ENCODE measurements at regions of chr5 and their contacts with region 1.

Region 1: DNA sequence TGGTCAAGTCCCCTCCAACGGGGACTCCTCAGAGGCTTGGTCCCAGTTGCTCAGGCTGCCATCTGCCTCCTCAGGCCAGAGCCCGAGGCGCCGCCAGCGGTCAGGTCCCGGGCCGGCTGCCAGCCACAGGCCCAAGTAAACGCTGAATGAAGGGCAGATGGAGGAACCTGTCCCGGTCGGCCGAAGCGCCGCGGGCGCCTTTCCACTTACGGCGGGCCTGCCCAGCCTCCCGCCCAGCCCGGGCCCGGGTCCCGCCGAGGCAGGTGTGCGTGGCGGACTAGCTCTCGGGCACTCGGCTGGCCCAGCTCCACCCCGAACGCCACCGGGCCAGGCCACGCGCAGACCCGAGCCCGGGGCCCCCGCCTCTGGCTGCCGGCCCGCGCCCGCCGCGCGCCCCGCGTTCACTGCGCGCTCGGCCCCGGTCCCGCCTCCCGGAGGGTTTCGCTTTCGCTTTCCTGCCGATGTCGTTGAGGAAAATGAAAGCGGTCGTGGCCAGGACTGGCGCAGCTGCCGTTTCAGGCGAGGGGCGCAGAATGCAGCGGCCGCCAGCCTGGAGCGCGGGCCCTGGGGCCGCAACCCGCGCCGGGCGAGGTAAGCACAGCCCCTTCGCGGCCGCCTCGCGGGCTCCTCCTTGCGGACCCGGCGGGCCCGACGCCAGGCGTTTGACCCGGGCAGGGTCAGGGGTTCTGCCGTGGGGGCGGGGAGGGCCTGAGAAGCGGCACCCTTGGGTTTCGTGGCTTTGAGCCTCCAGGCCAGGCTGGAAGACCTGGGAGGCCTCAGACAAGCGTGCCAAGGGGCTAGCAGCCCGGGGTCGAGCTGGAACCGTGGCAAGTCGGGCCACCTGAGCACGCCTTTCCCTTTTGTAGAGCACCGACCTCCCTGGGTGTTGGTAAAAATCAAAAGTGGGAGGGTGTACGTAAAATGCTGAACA is 41.2 kb downstream of the SLC22A5 start:
- DNase-seq: peak; percentile 92
- ATAC-seq: peak; percentile 68
- H3K4me3 Mint-ChIP-seq: peak overlapping the region; percentile 83
- H3K27ac Mint-ChIP-seq: peak overlapping the region; percentile 98
- H3K4me1 Mint-ChIP-seq: peaks cover 71% of the 10 kb centered on the region
- H3K27me3 Mint-ChIP-seq: no peaks in the 10 kb centered on the region

Region 2: GRCh38 chr5:132386644-132387286 is 24.0 kb before region 1 on chr5:
- CTCF ChIA-PET with region 1: interaction called, 21 read pairs
- POLR2A ChIA-PET with region 1: no interaction called
- intact Hi-C with region 1: loop called (anchors 1 to 2 kb)
- DNase-seq: peak; percentile 88
- ATAC-seq: peak; percentile 87
- H3K4me3 Mint-ChIP-seq: no peak overlapping the region
- H3K27ac Mint-ChIP-seq: peak overlapping the region; percentile 29
- H3K4me1 Mint-ChIP-seq: peaks cover 40% of the 10 kb centered on the region
- H3K27me3 Mint-ChIP-seq: no peaks in the 10 kb centered on the region

Region 3: DNA sequence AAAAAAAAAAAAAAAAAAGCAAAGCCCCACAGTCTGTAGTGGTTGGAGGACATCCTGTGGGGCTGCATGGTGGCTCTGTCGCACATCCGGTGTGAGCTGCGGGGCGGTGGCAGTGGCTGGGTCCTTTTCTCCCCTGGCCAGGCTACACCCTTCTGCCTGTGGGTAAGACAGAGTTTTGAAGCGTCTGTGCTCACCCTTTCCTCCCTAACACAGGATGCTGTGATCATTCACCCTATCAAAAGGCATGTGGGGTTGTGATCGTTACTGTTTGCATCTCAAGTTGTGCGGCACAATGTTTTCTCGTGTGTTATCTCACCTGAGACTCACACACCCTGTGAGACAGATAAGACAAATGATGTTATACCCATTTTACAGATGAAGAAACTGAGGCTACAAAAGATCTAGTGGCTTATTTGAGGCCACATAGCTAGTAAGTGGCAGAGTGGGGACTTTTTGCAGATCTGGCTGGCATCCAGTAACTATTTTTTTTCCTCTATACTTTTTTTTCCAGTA is 62.4 kb after region 1 on chr5:
- CTCF ChIA-PET with region 1: interaction called, 4 read pairs
- POLR2A ChIA-PET with region 1: interaction called, 38 read pairs
- intact Hi-C with region 1: no loop called
- DNase-seq: peak; percentile 83
- ATAC-seq: peak; percentile 94
- H3K4me3 Mint-ChIP-seq: no peak overlapping the region
- H3K27ac Mint-ChIP-seq: peak overlapping the region; percentile 93
- H3K4me1 Mint-ChIP-seq: peaks cover 59% of the 10 kb centered on the region
- H3K27me3 Mint-ChIP-seq: no peaks in the 10 kb centered on the region

Region 4: GRCh38 chr5:132490486-132491367 is 80.0 kb after region 1 on chr5 and contains the start of gene IRF1:
- CTCF ChIA-PET with region 1: interaction called, 13 read pairs
- POLR2A ChIA-PET with region 1: interaction called, 18 read pairs
- intact Hi-C with region 1: loop called (anchors 1 to 2 kb)
- DNase-seq: peak; percentile 99
- ATAC-seq: peak; percentile 67
- H3K4me3 Mint-ChIP-seq: peak within 1 kb of the TSS; percentile 96
- H3K27ac Mint-ChIP-seq: peak within 1 kb of the TSS; percentile 97
- H3K4me1 Mint-ChIP-seq: peaks cover 69% of the 10 kb centered on the region
- H3K27me3 Mint-ChIP-seq: no peaks in the 10 kb centered on the region
- total RNA-seq, gene IRF1: 121 to 130 TPM

Region 5: DNA sequence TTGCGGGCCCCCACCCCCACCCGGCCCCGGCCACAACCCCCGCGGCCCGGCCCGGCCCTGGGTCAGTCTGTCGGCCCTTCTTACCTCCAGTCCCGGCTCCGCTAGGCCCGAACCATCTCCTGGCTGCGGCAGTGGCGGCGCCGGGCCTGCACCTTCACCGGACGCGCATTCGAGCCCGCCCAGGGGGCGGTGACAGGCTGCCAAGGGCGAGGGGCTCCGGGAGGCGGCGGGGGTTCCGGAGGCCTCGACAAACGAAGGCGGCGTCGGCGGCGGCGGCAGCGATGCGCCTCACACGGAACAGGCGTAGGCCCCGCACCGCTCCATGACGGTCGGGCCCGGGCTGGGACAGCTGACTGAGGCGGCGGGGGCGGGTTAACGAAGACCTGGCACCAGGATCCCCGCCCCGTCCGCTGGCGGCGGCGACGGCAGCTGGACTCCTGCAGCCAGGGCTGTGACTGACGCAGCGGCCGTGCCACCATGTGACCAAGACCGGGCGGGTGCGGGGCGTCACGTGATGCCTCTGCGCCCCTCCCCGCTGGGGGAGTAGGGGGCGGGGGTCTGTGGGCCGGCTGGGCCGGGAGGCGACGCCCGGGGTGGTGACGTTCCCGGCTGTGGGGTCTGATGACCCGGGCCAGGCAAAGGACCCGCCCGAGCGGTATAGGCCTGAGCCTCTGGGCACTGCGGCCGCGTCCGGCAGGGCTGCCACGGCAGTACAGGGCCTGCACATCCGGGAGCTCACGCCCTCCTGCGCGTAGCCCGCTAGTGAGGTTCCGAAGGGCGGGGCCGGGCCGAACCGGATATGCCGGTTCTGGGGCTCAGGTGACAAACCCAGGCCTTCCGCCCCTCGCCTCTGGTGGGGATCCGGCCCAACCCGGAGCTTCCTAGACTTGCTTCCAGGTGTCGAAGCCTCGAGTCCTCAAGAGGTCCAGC is 552.7 kb after region 1 on chr5 and contains the start of gene AFF4:
- CTCF ChIA-PET with region 1: no interaction called
- POLR2A ChIA-PET with region 1: no interaction called
- intact Hi-C with region 1: loop called in 1 of 2 experiments (anchors 10 kb)
- DNase-seq: peak; percentile 94
- ATAC-seq: peak; percentile 92
- H3K4me3 Mint-ChIP-seq: peak within 1 kb of the TSS; percentile 96
- H3K27ac Mint-ChIP-seq: peak within 1 kb of the TSS; percentile 99
- H3K4me1 Mint-ChIP-seq: peaks cover 32% of the 10 kb centered on the region
- H3K27me3 Mint-ChIP-seq: no peaks in the 10 kb centered on the region
- total RNA-seq, gene AFF4: 20.9 to 29.3 TPM

Measured in activated CD4-positive, alpha-beta T cell treated with anti-CD3 and anti-CD28 coated beads for 36 hours (primary cell).